ENCODE measurements at regions of chr2 and their contacts with region 1.

Region 1: DNA sequence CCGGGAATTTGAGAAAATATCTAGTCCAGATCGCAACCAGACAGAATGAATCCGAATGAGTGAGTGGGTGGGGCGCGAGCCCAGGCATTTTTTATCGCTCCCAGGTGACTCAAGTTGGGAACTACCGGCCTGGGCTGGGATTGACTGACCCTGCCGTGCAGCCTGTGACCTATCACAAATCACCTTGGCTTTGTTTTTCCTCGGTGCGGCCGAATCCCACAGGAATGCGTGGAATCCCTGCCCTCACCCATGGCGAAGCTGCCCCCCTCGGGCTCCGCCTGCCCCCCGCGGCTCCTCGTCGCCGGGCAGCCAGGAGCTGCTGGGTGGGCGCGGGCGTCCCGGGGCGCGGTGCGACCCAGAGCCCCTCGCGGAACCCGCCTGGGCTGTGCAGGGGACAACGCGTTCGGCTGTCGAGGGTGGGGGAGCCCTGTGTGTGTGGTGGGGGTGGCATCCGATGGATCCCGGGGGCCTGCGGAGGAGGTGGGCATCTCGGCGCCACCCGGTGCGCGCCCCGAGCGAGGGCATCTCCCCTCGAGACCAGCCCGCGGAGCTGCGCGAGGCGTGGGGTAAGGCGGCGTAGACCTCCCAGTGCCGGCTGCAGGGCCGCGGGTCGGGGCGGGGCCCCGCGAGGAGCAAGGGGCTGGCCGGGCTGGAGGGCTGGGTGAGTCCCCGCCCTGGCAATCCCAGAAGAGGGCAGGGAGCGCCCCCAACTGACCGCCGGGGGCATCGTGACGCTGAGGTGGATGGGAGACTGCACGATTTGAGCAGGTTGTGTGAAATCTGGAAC is 16.5 kb downstream of the B3GNT7 start:
- DNase-seq: peak; percentile 69 to 98
- H3K4me3 ChIP-seq: peak overlapping the region; percentile 33 to 62 (median 42)
- H3K27ac ChIP-seq: peak overlapping the region; percentile 41; the same call in 1 of the 2 replicates
- H3K4me1 ChIP-seq: peaks cover 14 to 29% (median 20%) of the 10 kb centered on the region in 4 experiments
- H3K27me3 ChIP-seq: no peaks in the 10 kb centered on the region
- CTCF ChIP-seq: peak; percentile 90 to 97 (median 96)
- EP300 ChIP-seq: no peak
- POLR2A ChIP-seq: peak in 1 of 2 experiments; percentile 63; a peak in 1 of 3 replicates
- RAD21 ChIP-seq: peak; percentile 93 to 94

Region 2: DNA sequence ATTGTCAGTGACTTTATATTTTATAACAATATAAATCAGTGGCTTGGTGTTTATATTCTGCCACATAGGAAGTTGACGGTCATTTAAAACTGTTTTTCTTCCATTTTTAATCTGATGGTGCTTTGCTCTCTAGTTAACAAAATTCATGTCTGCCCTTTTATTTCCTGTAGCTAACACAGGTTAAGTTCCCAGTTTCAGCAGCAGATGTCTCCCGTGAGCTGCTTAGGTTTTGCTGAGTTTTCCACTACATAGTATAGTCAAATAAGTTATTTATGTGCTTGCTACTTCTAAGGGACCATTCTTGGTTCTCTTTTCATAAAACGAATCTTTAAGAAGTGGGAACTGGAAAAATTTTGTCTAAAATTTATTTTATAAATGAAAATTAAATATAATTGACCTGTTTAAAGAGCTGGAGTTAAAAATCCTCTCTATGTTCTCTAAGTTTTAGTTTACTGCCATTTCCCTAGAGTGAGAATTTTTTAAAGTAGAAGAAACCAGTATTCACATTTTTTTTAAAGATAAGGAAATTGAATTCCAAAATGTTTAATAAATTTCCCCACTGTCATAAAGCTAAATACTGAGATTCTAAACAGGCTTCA is 307.8 kb before region 1 on chr2:
- CTCF ChIA-PET with region 1: interaction called, 10 read pairs
- POLR2A ChIA-PET with region 1: no interaction called
- DNase-seq: peak in 1 of 2 experiments; percentile 64
- H3K4me3 ChIP-seq: no peak overlapping the region
- H3K27ac ChIP-seq: no peak overlapping the region
- H3K4me1 ChIP-seq: no peaks in the 10 kb centered on the region
- H3K27me3 ChIP-seq: no peaks in the 10 kb centered on the region
- CTCF ChIP-seq: peak in 2 of 3 experiments; percentile 67 to 70; a peak in 3 of 4 replicates
- EP300 ChIP-seq: no peak
- POLR2A ChIP-seq: no peak
- RAD21 ChIP-seq: peak; percentile 80 to 83

Region 3: GRCh38 chr2:231290321-231291015 is 121.6 kb before region 1 on chr2:
- CTCF ChIA-PET with region 1: interaction called, 36 read pairs
- POLR2A ChIA-PET with region 1: interaction called, 5 read pairs
- DNase-seq: no peak
- H3K4me3 ChIP-seq: no peak overlapping the region
- H3K27ac ChIP-seq: no peak overlapping the region
- H3K4me1 ChIP-seq: no peaks in the 10 kb centered on the region
- H3K27me3 ChIP-seq: no peaks in the 10 kb centered on the region
- CTCF ChIP-seq: no peak
- EP300 ChIP-seq: no peak
- POLR2A ChIP-seq: no peak
- RAD21 ChIP-seq: no peak

Region 4: GRCh38 chr2:231334179-231334930 is 77.7 kb before region 1 on chr2:
- CTCF ChIA-PET with region 1: interaction called, 11 read pairs
- POLR2A ChIA-PET with region 1: no interaction called
- DNase-seq: no peak
- H3K4me3 ChIP-seq: no peak overlapping the region
- H3K27ac ChIP-seq: no peak overlapping the region
- H3K4me1 ChIP-seq: peaks cover 0 to 3% (median 1%) of the 10 kb centered on the region in 4 experiments; a peak in 2 of 7 replicates
- H3K27me3 ChIP-seq: no peaks in the 10 kb centered on the region
- CTCF ChIP-seq: no peak
- EP300 ChIP-seq: no peak
- POLR2A ChIP-seq: no peak
- RAD21 ChIP-seq: no peak

Region 5: GRCh38 chr2:231387904-231388724 is 23.9 kb before region 1 on chr2:
- CTCF ChIA-PET with region 1: interaction called, 537 read pairs
- POLR2A ChIA-PET with region 1: interaction called, 14 read pairs
- DNase-seq: no peak
- H3K4me3 ChIP-seq: no peak overlapping the region
- H3K27ac ChIP-seq: no peak overlapping the region
- H3K4me1 ChIP-seq: peaks cover 0 to 14% (median 9%) of the 10 kb centered on the region in 4 experiments; a peak in 6 of 7 replicates
- H3K27me3 ChIP-seq: no peaks in the 10 kb centered on the region
- CTCF ChIP-seq: no peak
- EP300 ChIP-seq: no peak
- POLR2A ChIP-seq: no peak
- RAD21 ChIP-seq: no peak

Region 6: GRCh38 chr2:231452799-231453508 is 40.9 kb after region 1 on chr2:
- CTCF ChIA-PET with region 1: interaction called, 122 read pairs
- POLR2A ChIA-PET with region 1: interaction called, 235 read pairs
- DNase-seq: peak in 1 of 2 experiments; percentile 65
- H3K4me3 ChIP-seq: no peak overlapping the region
- H3K27ac ChIP-seq: peak overlapping the region; percentile 44; the same call in 1 of the 2 replicates
- H3K4me1 ChIP-seq: peaks cover 0 to 5% (median 2%) of the 10 kb centered on the region in 4 experiments; a peak in 3 of 7 replicates
- H3K27me3 ChIP-seq: no peaks in the 10 kb centered on the region
- CTCF ChIP-seq: no peak
- EP300 ChIP-seq: no peak
- POLR2A ChIP-seq: peak; percentile 52 to 83; a peak in 2 of 3 replicates
- RAD21 ChIP-seq: no peak

Region 7: GRCh38 chr2:232588680-232589585 is 1176.9 kb after region 1 on chr2:
- CTCF ChIA-PET with region 1: no interaction called
- POLR2A ChIA-PET with region 1: no interaction called
- DNase-seq: no peak
- H3K4me3 ChIP-seq: no peak overlapping the region
- H3K27ac ChIP-seq: no peak overlapping the region
- H3K4me1 ChIP-seq: peaks cover 0 to 9% (median 0%) of the 10 kb centered on the region in 4 experiments; a peak in 2 of 7 replicates
- H3K27me3 ChIP-seq: no peaks in the 10 kb centered on the region
- CTCF ChIP-seq: no peak
- EP300 ChIP-seq: no peak
- POLR2A ChIP-seq: no peak
- RAD21 ChIP-seq: no peak